Activated naive CD4-positive, alpha-beta T cell treated with anti-CD3 and anti-CD28 coated beads for 36 hours (primary cell): ENCODE measurements at regions of chr19 and their contacts with region 1.

Region 1: DNA sequence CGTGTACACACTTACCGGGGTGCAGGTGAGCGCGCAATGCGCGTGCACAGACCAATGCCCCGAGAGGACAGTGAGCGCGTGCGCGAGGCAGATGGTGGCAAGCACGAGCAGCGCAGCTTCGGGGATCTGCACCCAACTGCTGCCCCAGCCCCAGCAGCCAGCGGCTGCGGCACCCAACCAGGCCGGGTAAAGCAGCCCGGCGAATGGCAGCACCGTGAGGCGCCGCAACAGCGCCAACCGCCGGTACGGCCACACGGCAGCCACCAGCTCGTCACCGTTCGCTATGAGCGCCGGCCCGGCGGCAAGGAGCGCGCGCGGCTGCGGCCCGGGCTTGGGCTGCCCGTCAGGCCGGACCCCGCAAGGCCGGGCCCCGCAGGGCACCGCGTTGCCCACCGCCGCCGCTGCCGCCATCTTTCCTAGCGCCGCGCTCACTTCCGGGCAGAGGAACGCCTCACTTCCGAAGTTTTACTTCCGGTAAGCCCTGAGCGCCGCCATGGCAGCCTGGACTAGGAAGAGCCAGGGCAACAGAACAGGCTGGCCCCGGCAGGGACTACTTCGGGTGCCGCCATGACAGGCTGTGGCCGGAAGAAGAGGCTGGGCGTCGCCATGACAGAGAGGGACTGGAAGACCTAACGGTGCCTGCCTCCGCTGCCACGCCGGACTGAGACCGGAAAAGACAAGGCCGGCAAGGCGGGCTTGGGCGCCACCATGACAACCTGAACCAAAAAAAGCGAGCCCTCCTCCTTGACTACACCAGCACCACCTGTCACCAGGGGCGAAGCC is at the start of gene ATP13A1:
- DNase-seq: peak; percentile 93
- H3K4me3 Mint-ChIP-seq: peak within 1 kb of the TSS; percentile 95
- H3K27ac Mint-ChIP-seq: peak within 1 kb of the TSS; percentile 97
- H3K4me1 Mint-ChIP-seq: peaks cover 34% of the 10 kb centered on the region
- H3K27me3 Mint-ChIP-seq: no peaks in the 10 kb centered on the region
- total RNA-seq, gene ATP13A1: 48.7 to 55.1 TPM

Region 2: GRCh38 chr19:19192078-19192882 is 471.2 kb before region 1 on chr19 and contains the starts of genes BORCS8 and RFXANK:
- CTCF ChIA-PET with region 1: no interaction called
- intact Hi-C with region 1: loop called (anchors 1 kb)
- DNase-seq: peak; percentile 100
- H3K4me3 Mint-ChIP-seq: peak within 1 kb of the TSS; percentile 93
- H3K27ac Mint-ChIP-seq: peak within 1 kb of the TSS; percentile 96
- H3K4me1 Mint-ChIP-seq: peaks cover 49% of the 10 kb centered on the region
- H3K27me3 Mint-ChIP-seq: no peaks in the 10 kb centered on the region
- total RNA-seq, gene BORCS8: 14.0 to 16.1 TPM
- total RNA-seq, gene RFXANK: 48.4 to 49.3 TPM

Region 3: GRCh38 chr19:19597809-19598306 is 65.6 kb before region 1 on chr19:
- CTCF ChIA-PET with region 1: no interaction called
- intact Hi-C with region 1: loop called (anchors 1 kb)
- DNase-seq: peak; percentile 78
- H3K4me3 Mint-ChIP-seq: peak overlapping the region; percentile 75
- H3K27ac Mint-ChIP-seq: peak overlapping the region; percentile 100
- H3K4me1 Mint-ChIP-seq: peaks cover 85% of the 10 kb centered on the region
- H3K27me3 Mint-ChIP-seq: no peaks in the 10 kb centered on the region

Region 4: DNA sequence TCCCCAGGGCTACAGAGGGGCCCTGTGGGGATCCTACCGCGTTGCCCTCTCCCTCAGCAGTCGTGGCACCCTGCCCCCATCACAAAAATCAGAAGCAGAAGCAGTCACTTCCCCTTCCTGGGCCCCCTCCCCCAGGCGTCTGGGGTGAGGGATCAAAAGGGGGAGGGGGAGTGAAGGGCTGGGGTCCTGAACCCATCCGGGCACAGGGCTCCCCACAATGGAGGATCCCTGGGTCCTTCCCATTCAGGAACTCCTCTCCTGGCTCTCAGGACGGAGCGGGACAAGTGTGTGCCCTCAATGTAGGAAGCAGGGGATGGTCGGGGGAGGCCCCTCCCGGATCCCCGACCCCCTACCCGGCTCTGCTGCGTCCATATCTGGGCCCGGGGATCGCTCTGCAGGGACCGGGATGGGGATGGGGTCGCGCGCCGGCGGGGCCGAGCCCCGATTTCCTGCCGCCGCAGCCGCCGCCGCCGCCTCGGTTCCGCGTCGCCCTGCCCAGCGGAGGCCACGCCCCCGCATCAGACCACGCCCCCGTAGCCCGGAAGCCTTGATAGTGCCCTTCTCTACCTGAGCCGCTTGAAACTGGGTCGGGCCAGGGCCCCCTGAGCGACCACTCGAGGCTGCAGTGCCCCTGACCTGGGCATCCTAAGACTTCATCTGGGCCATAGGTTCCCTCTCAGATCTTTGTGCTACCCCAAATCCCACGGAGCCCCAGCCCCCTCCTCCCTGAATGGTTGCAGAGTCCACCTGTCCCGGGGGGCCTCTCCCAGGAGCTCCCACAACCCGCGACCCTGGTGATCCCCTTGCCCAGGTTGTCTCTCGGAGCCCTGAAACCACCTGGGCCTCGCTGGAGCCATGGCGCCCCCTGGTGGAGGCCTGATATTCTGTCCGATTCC is 20.0 kb before region 1 on chr19 and contains the start of gene GMIP:
- CTCF ChIA-PET with region 1: interaction called, 5 read pairs
- intact Hi-C with region 1: loop called (anchors 1 kb)
- DNase-seq: peak; percentile 91
- H3K4me3 Mint-ChIP-seq: peak within 1 kb of the TSS; percentile 92
- H3K27ac Mint-ChIP-seq: peak within 1 kb of the TSS; percentile 98
- H3K4me1 Mint-ChIP-seq: peaks cover 12% of the 10 kb centered on the region
- H3K27me3 Mint-ChIP-seq: no peaks in the 10 kb centered on the region
- total RNA-seq, gene GMIP: 38.7 to 40.6 TPM

Region 5: DNA sequence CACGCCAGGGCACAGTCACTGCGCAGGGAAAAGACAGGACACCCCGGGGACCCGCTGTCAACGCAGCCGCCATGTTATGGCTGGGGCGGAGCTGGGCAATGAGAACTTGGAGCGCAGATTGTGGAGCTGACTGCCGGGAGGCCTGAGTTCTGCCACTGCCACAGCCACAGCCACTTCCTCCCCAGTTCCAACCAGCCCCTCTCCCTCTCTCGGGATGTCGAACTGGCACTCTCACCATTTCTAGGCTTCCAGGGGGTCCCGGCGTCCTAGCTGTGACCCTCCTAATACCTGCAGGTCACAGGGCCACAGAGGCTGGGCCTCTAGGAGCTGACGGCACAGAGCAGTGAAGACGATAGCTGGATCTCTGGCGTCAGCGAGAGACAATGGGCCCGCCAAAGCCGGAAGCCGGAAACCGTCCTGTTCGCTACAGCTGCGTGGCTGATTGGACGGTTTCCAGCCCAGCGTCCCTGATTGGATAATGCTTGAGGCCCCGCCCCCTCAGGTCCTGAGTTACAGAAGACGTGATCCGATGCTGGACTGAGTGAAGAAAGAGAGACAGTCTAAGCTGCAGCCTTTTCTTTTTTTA is 158.0 kb after region 1 on chr19 and contains the start of gene ZNF506:
- CTCF ChIA-PET with region 1: no interaction called
- intact Hi-C with region 1: loop called (anchors 1 kb)
- DNase-seq: peak; percentile 99
- H3K4me3 Mint-ChIP-seq: peak within 1 kb of the TSS; percentile 100
- H3K27ac Mint-ChIP-seq: peak within 1 kb of the TSS; percentile 100
- H3K4me1 Mint-ChIP-seq: peaks cover 44% of the 10 kb centered on the region
- H3K27me3 Mint-ChIP-seq: no peaks in the 10 kb centered on the region
- total RNA-seq, gene ZNF506: 32.6 to 34.0 TPM

Region 6: DNA sequence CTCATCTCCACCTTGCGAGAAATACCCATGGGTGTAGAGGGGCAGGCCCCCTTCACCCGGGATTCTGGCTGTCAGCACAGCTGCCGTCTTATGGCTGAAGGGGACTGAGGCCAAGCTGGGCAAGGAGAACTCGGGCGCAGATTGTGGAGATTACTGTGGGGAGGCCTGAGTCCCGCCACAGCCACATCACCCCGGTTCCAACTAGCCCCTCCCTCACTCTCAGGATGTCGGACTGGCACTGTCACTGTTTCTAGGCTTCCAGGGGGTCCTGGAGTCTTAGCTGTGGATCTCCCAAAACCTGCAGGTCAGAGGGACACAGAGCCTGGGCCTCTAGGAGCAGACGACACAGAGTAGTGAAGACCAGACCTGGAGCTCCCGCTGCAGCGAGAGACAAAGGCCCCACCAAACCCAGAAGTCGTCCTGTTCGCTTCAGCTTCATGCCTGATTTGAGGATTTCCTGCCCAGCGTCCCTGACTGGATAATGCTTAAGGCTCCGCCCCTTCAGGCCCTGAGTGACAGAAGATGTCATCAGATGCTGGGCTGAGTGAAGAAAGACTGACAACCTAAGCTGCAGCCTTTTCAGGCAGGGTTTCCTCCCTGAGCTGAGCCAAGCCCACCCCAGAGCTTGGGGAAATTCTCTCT is 293.1 kb after region 1 on chr19:
- CTCF ChIA-PET with region 1: no interaction called
- intact Hi-C with region 1: loop called (anchors 1 kb)
- DNase-seq: peak; percentile 9
- H3K4me3 Mint-ChIP-seq: no peak overlapping the region
- H3K27ac Mint-ChIP-seq: no peak overlapping the region
- H3K4me1 Mint-ChIP-seq: no peaks in the 10 kb centered on the region
- H3K27me3 Mint-ChIP-seq: no peaks in the 10 kb centered on the region

Region 7: GRCh38 chr19:20167020-20167644 is 503.7 kb after region 1 on chr19 and contains the start of gene ZNF486:
- CTCF ChIA-PET with region 1: no interaction called
- intact Hi-C with region 1: loop called (anchors 5 kb)
- DNase-seq: peak; percentile 98
- H3K4me3 Mint-ChIP-seq: peak within 1 kb of the TSS; percentile 98
- H3K27ac Mint-ChIP-seq: peak within 1 kb of the TSS; percentile 91
- H3K4me1 Mint-ChIP-seq: peaks cover 19% of the 10 kb centered on the region
- H3K27me3 Mint-ChIP-seq: no peaks in the 10 kb centered on the region
- total RNA-seq, gene ZNF486: 11.3 to 13.2 TPM